ENCODE measurements at regions of chr13 and their contacts with region 1.

Region 1: GRCh38 chr13:108322206-108322824 is 52.8 kb downstream of the TNFSF13B start:
- DNase-seq: no peak
- ATAC-seq: peak; percentile 78
- H3K4me3 Mint-ChIP-seq: no peak overlapping the region
- H3K27ac Mint-ChIP-seq: no peak overlapping the region
- H3K4me1 Mint-ChIP-seq: peaks cover 15% of the 10 kb centered on the region
- H3K27me3 Mint-ChIP-seq: no peaks in the 10 kb centered on the region
- CTCF ChIP-seq: no peak

Region 2: GRCh38 chr13:107883561-107884175 is 438.6 kb before region 1 on chr13:
- CTCF ChIA-PET with region 1: no interaction called
- POLR2A ChIA-PET with region 1: no interaction called
- intact Hi-C with region 1: no loop called
- DNase-seq: no peak
- ATAC-seq: no peak
- H3K4me3 Mint-ChIP-seq: no peak overlapping the region
- H3K27ac Mint-ChIP-seq: no peak overlapping the region
- H3K4me1 Mint-ChIP-seq: no peaks in the 10 kb centered on the region
- H3K27me3 Mint-ChIP-seq: no peaks in the 10 kb centered on the region
- CTCF ChIP-seq: no peak

Region 3: GRCh38 chr13:108227651-108228272 is 94.6 kb before region 1 on chr13:
- CTCF ChIA-PET with region 1: interaction called, 3 read pairs
- POLR2A ChIA-PET with region 1: no interaction called
- intact Hi-C with region 1: loop called (anchors 2 kb)
- DNase-seq: no peak
- ATAC-seq: no peak
- H3K4me3 Mint-ChIP-seq: no peak overlapping the region
- H3K27ac Mint-ChIP-seq: no peak overlapping the region
- H3K4me1 Mint-ChIP-seq: peaks cover 54% of the 10 kb centered on the region
- H3K27me3 Mint-ChIP-seq: no peaks in the 10 kb centered on the region
- CTCF ChIP-seq: peak; percentile 96

Region 4: DNA sequence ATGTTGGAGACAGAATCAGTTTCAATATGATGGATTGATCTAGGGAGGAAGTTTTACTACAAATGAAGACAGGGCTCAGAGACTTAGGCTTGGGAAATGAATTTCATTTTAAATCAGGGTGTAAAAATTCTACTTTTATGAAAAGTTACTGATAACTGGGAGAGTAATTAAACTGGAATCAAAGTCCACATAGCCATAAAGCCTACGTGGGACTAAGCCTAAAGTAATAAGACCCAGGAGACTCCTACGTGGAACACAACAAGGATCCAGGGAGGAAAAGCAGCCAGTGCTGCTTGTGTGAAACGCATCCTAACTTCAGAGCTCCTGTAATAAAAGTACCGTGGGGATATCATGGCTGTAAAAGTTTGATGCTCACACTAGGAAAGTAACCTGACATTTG is 155.1 kb after region 1 on chr13:
- CTCF ChIA-PET with region 1: no interaction called
- POLR2A ChIA-PET with region 1: no interaction called
- intact Hi-C with region 1: no loop called
- DNase-seq: no peak
- ATAC-seq: no peak
- H3K4me3 Mint-ChIP-seq: no peak overlapping the region
- H3K27ac Mint-ChIP-seq: no peak overlapping the region
- H3K4me1 Mint-ChIP-seq: no peaks in the 10 kb centered on the region
- H3K27me3 Mint-ChIP-seq: no peaks in the 10 kb centered on the region
- CTCF ChIP-seq: no peak

Region 5: GRCh38 chr13:108508263-108508662 is 185.9 kb after region 1 on chr13:
- CTCF ChIA-PET with region 1: no interaction called
- POLR2A ChIA-PET with region 1: no interaction called
- intact Hi-C with region 1: loop called (anchors 5 kb)
- DNase-seq: no peak
- ATAC-seq: no peak
- H3K4me3 Mint-ChIP-seq: no peak overlapping the region
- H3K27ac Mint-ChIP-seq: no peak overlapping the region
- H3K4me1 Mint-ChIP-seq: no peaks in the 10 kb centered on the region
- H3K27me3 Mint-ChIP-seq: no peaks in the 10 kb centered on the region
- CTCF ChIP-seq: no peak

Region 6: GRCh38 chr13:108877300-108877699 is 555.0 kb after region 1 on chr13:
- CTCF ChIA-PET with region 1: no interaction called
- POLR2A ChIA-PET with region 1: no interaction called
- intact Hi-C with region 1: loop called (anchors 5 kb)
- DNase-seq: no peak
- ATAC-seq: no peak
- H3K4me3 Mint-ChIP-seq: no peak overlapping the region
- H3K27ac Mint-ChIP-seq: no peak overlapping the region
- H3K4me1 Mint-ChIP-seq: no peaks in the 10 kb centered on the region
- H3K27me3 Mint-ChIP-seq: no peaks in the 10 kb centered on the region
- CTCF ChIP-seq: no peak

Region 7: DNA sequence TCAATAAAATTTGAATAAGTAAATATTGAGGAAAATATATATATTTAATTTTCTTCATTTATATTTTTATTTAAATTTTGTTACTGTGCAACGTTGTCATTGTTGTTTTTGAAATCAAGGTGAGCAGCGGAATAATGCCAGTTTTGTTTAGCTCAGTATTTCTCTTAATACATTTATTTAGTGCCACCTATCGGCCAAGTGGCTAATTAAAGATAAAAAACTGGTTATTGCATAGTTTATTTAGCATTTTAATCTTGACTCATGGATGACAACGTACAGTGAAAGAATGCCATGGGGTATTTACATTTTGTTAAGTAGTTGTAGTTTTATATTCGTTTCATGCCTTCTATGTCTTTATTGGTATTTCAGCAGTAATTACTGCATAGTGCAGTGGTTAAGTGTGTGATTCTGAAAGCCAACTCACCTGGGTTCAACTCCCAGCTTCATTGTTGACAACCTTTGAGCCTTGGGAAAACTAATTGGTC is 572.9 kb after region 1 on chr13:
- CTCF ChIA-PET with region 1: interaction called, 9 read pairs
- POLR2A ChIA-PET with region 1: no interaction called
- intact Hi-C with region 1: loop called (anchors 1 kb)
- DNase-seq: no peak
- ATAC-seq: no peak
- H3K4me3 Mint-ChIP-seq: no peak overlapping the region
- H3K27ac Mint-ChIP-seq: no peak overlapping the region
- H3K4me1 Mint-ChIP-seq: no peaks in the 10 kb centered on the region
- H3K27me3 Mint-ChIP-seq: peaks cover 7% of the 10 kb centered on the region
- CTCF ChIP-seq: peak; percentile 71

Region 8: GRCh38 chr13:109786457-109787134 is 1464.3 kb after region 1 on chr13 and contains the start of gene IRS2:
- CTCF ChIA-PET with region 1: no interaction called
- POLR2A ChIA-PET with region 1: no interaction called
- intact Hi-C with region 1: loop called (anchors 10 kb)
- DNase-seq: peak; percentile 84
- ATAC-seq: peak; percentile 88
- H3K4me3 Mint-ChIP-seq: peak within 1 kb of the TSS; percentile 86
- H3K27ac Mint-ChIP-seq: peak within 1 kb of the TSS; percentile 56
- H3K4me1 Mint-ChIP-seq: peaks cover under 1% of the 10 kb centered on the region
- H3K27me3 Mint-ChIP-seq: peaks cover 4% of the 10 kb centered on the region
- CTCF ChIP-seq: no peak
- total RNA-seq, gene IRS2: 4.2 and 4.4 TPM in 2 replicates

Region 9: GRCh38 chr13:110116072-110116487 is 1793.8 kb after region 1 on chr13:
- CTCF ChIA-PET with region 1: no interaction called
- POLR2A ChIA-PET with region 1: no interaction called
- intact Hi-C with region 1: loop called (anchors 5 kb)
- DNase-seq: peak; percentile 29
- ATAC-seq: peak; percentile 52
- H3K4me3 Mint-ChIP-seq: no peak overlapping the region
- H3K27ac Mint-ChIP-seq: no peak overlapping the region
- H3K4me1 Mint-ChIP-seq: no peaks in the 10 kb centered on the region
- H3K27me3 Mint-ChIP-seq: peaks cover 12% of the 10 kb centered on the region
- CTCF ChIP-seq: no peak